ENCODE measurements at regions of chr6 and their contacts with region 1.

Region 1: GRCh38 chr6:161370880-161371279 is 97.0 kb upstream of the AGPAT4 start:
- DNase-seq: peak; percentile 62
- H3K4me3 ChIP-seq: no peak overlapping the region
- H3K27ac ChIP-seq: no peak overlapping the region
- H3K4me1 ChIP-seq: peaks cover 7% of the 10 kb centered on the region
- H3K27me3 ChIP-seq: no peaks in the 10 kb centered on the region
- CTCF ChIP-seq: peak; percentile 91

Region 2: GRCh38 chr6:160520043-160520904 is 850.6 kb before region 1 on chr6:
- CTCF ChIA-PET with region 1: no interaction called
- POLR2A ChIA-PET with region 1: no interaction called
- intact Hi-C with region 1: loop called (anchors 10 kb)
- DNase-seq: peak; percentile 71
- H3K4me3 ChIP-seq: peak overlapping the region; percentile 49
- H3K27ac ChIP-seq: no peak overlapping the region
- H3K4me1 ChIP-seq: no peaks in the 10 kb centered on the region
- H3K27me3 ChIP-seq: peaks cover 13% of the 10 kb centered on the region
- CTCF ChIP-seq: no peak; the same call in 1 of the 2 replicates

Region 3: GRCh38 chr6:160750276-160750689 is 620.6 kb before region 1 on chr6:
- CTCF ChIA-PET with region 1: no interaction called
- POLR2A ChIA-PET with region 1: no interaction called
- intact Hi-C with region 1: loop called (anchors 5 kb)
- DNase-seq: peak; percentile 14
- H3K4me3 ChIP-seq: no peak overlapping the region
- H3K27ac ChIP-seq: no peak overlapping the region
- H3K4me1 ChIP-seq: no peaks in the 10 kb centered on the region
- H3K27me3 ChIP-seq: peaks cover 19% of the 10 kb centered on the region
- CTCF ChIP-seq: peak; percentile 42

Region 4: DNA sequence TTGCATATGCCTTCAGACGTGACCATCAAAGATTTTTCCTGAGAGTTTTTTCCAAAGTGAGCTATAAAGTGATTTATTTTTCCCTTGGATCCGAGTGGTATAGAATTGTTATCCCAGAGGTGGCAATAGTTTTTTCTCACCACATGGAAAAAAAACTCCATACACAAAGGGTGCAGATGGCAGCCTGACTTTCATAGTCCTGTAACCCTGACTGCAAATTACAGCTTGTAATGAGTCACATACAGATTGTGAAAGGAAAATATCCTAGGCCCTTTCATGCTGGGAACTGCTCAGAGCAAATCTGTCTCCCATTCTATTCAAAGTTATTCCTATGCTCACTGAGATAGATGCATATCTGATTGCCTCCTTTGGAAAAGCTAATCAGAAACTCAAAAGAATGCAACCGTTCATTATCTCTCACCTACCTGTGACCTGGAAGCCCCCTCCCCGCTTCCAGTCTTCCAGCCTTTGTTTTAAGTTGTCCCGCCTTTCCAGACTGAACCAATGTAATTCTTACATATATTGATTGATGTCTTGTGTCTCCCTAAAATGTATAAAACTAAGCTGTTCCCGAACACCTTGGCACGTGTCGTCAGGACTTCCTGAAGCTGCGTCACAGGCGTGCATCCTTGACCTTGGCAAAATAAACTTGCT is 488.0 kb before region 1 on chr6:
- CTCF ChIA-PET with region 1: no interaction called
- POLR2A ChIA-PET with region 1: no interaction called
- intact Hi-C with region 1: no loop called
- DNase-seq: no peak
- H3K4me3 ChIP-seq: no peak overlapping the region
- H3K27ac ChIP-seq: no peak overlapping the region
- H3K4me1 ChIP-seq: no peaks in the 10 kb centered on the region
- H3K27me3 ChIP-seq: peaks cover 3% of the 10 kb centered on the region
- CTCF ChIP-seq: no peak

Region 5: GRCh38 chr6:160992061-160992979 is 378.6 kb before region 1 on chr6:
- CTCF ChIA-PET with region 1: no interaction called
- POLR2A ChIA-PET with region 1: no interaction called
- intact Hi-C with region 1: loop called (anchors 5 kb)
- DNase-seq: peak; percentile 79
- H3K4me3 ChIP-seq: peak overlapping the region; percentile 87
- H3K27ac ChIP-seq: peak overlapping the region; percentile 86
- H3K4me1 ChIP-seq: no peaks in the 10 kb centered on the region
- H3K27me3 ChIP-seq: no peaks in the 10 kb centered on the region
- CTCF ChIP-seq: peak; percentile 77

Region 6: DNA sequence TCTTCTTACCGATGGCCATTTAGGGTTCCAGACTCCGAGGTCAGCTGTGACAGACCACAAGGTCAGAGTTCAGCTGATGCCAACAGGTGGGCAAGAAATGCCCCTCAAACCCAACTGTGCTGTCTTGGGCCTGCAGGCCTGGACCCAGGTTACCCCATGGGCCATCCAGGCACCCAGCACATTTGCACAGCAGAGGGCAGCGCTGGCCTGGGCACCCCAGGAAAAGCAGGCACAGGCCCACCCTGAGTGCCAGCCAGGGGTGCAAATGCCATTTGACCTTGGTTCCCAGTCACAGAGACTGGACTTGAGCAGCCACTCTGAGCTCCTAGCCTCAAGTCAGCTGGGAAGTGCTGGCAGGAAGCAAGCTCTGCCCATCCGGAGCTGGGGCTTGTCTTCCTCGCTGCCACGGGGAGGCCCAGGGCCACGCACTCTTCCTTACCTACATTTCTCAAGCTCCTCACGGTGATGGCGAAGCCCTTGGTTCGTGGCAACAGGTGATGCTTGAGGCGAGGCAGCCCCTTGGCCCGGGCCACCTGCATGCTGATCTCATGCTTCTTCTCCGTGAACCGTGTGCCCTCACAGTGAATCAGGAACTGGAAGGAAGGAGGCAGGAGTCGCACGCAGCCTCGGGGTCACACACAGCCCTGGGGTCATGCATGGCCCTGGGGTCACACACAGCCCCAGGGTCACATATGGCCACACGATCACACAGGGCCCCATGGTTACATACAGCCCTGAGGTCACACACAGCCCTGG is 217.8 kb before region 1 on chr6:
- CTCF ChIA-PET with region 1: interaction called, 3 read pairs
- POLR2A ChIA-PET with region 1: no interaction called
- intact Hi-C with region 1: loop called (anchors 5 kb)
- DNase-seq: no peak
- H3K4me3 ChIP-seq: no peak overlapping the region
- H3K27ac ChIP-seq: no peak overlapping the region
- H3K4me1 ChIP-seq: no peaks in the 10 kb centered on the region
- H3K27me3 ChIP-seq: no peaks in the 10 kb centered on the region
- CTCF ChIP-seq: peak; percentile 49

Region 7: DNA sequence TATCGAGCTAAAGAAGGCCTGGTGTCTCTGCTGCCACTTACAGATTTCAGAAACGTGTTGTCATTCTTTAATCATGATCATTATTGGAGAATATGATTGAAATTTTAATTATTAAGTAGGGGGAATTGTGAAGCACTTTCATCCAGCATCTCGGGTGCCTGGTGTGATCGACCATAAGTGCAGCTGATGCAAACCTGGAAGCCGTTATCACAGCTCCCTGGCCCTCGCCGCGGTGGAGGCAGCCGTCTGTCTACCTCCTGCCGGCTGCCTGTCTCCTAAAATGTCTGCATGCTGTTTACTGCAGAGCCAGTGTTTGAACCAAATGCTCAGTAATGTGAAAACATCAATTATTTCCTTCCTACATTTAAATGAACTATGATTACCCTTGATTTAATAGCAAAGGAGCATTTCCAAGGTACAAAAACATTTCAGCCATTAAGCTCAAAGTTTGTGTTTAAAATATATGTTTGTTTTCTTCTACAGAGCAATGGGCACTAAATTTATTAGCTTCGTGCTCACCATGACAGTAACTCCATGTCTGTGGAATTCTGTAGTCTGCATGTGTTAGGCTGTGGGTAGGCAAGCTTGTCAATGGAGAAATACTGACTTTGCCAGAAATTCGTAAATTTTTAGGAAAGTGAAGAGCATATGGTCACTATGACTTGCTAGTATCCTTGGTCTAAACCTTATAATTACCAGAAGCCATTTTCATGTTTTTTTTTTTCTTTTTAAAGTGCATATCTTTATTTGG is 87.5 kb after region 1 on chr6:
- CTCF ChIA-PET with region 1: no interaction called
- POLR2A ChIA-PET with region 1: no interaction called
- intact Hi-C with region 1: no loop called
- DNase-seq: no peak
- H3K4me3 ChIP-seq: no peak overlapping the region
- H3K27ac ChIP-seq: no peak overlapping the region
- H3K4me1 ChIP-seq: no peaks in the 10 kb centered on the region
- H3K27me3 ChIP-seq: no peaks in the 10 kb centered on the region
- CTCF ChIP-seq: no peak